Right ventricle myocardium inferior (tissue), 1 donor: ENCODE measurements at regions of chr1 and their contacts with region 1.

Region 1: GRCh38 chr1:3410142-3410925 is 44.1 kb upstream of the ARHGEF16 start:
- DNase-seq: no peak
- ATAC-seq: peak; percentile 86

Region 2: DNA sequence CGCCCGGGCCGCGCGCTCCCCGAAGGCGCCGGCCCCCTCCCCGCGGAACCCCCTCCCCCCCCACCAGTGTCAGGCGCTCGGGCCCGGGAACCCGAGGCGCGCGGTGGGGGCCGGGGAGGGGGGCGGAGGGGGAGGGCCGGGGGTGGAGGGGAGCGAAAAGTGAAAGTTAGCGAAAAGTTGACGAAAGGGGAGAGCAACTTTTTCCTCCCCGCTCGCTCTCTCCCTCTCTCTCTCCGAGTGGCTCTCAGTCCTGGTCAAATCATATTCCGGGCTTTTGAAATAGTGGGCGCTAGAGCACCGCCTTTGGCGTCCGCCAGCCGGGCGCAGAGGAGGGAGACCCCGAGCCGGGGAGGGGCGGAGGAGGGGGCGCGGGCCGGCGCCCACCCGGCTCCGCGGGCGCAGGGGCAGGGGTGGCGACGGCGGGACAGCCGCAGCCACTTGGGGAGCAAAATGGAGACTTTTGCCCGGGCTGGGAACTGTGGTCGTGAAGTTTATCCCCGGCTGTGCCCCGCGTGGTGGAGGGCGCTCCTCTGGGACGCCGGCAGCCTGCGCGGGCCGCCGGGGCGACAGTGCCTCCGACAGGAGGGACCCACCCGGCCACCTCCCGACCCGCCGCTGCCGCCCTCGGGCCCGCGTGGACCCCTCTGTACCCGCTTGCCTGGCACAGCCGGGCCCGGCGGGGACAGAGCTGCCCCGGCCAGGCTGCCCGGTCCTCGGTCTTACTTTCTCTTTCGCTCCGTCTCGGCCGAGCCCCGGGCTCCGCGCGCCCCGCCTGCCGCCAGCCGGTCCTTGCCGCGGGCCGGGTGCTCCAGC is 340.6 kb before region 1 on chr1:
- intact Hi-C with region 1: loop called (anchors 1 kb)
- DNase-seq: peak; percentile 55
- ATAC-seq: peak; percentile 39

Region 3: GRCh38 chr1:3222042-3222692 is 188.2 kb before region 1 on chr1:
- intact Hi-C with region 1: no loop called
- DNase-seq: no peak
- ATAC-seq: no peak

Region 4: GRCh38 chr1:3292868-3293562 is 117.3 kb before region 1 on chr1:
- intact Hi-C with region 1: loop called (anchors 10 kb)
- DNase-seq: no peak
- ATAC-seq: no peak